H1 (cell line): ENCODE measurements at regions of chr1 and their contacts with region 1.

Region 1: GRCh38 chr1:117284399-117285215 is 73.9 kb upstream of the VTCN1 start:
- DNase-seq: no peak
- H3K4me3 ChIP-seq: no peak overlapping the region
- H3K27ac ChIP-seq: no peak overlapping the region
- H3K4me1 ChIP-seq: no peaks in the 10 kb centered on the region
- H3K27me3 ChIP-seq: no peaks in the 10 kb centered on the region
- CTCF ChIP-seq: peak in 2 of 3 experiments; percentile 67 to 76; a peak in 3 of 4 replicates
- EP300 ChIP-seq: no peak
- POLR2A ChIP-seq: no peak
- RAD21 ChIP-seq: peak; percentile 98 to 99

Region 2: GRCh38 chr1:117067533-117068370 is 216.9 kb before region 1 on chr1:
- CTCF ChIA-PET with region 1: interaction called, 30 read pairs
- POLR2A ChIA-PET with region 1: no interaction called
- DNase-seq: no peak
- H3K4me3 ChIP-seq: no peak overlapping the region
- H3K27ac ChIP-seq: no peak overlapping the region
- H3K4me1 ChIP-seq: no peaks in the 10 kb centered on the region; a peak in 1 of 7 replicates
- H3K27me3 ChIP-seq: peaks cover 0 to 1% (median 0%) of the 10 kb centered on the region in 4 experiments; a peak in 1 of 7 replicates
- CTCF ChIP-seq: peak; percentile 57 to 80 (median 67)
- EP300 ChIP-seq: no peak
- POLR2A ChIP-seq: no peak
- RAD21 ChIP-seq: peak; percentile 86 to 88

Region 3: GRCh38 chr1:117110774-117111173 is 173.8 kb before region 1 on chr1:
- CTCF ChIA-PET with region 1: interaction called, 31 read pairs
- POLR2A ChIA-PET with region 1: interaction called, 4 read pairs
- DNase-seq: no peak
- H3K4me3 ChIP-seq: no peak overlapping the region
- H3K27ac ChIP-seq: no peak overlapping the region
- H3K4me1 ChIP-seq: peaks cover 2 to 5% (median 3%) of the 10 kb centered on the region in 4 experiments; a peak in 4 of 7 replicates
- H3K27me3 ChIP-seq: no peaks in the 10 kb centered on the region
- CTCF ChIP-seq: no peak
- EP300 ChIP-seq: no peak
- POLR2A ChIP-seq: no peak
- RAD21 ChIP-seq: no peak

Region 4: GRCh38 chr1:117128323-117129079 is 156.1 kb before region 1 on chr1:
- CTCF ChIA-PET with region 1: interaction called, 114 read pairs
- POLR2A ChIA-PET with region 1: interaction called, 8 read pairs
- DNase-seq: no peak
- H3K4me3 ChIP-seq: no peak overlapping the region
- H3K27ac ChIP-seq: no peak overlapping the region
- H3K4me1 ChIP-seq: peaks cover 0 to 4% (median 1%) of the 10 kb centered on the region in 4 experiments; a peak in 2 of 7 replicates
- H3K27me3 ChIP-seq: no peaks in the 10 kb centered on the region; a peak in 1 of 7 replicates
- CTCF ChIP-seq: peak in 1 of 3 experiments; percentile 31; a peak in 2 of 4 replicates
- EP300 ChIP-seq: no peak
- POLR2A ChIP-seq: no peak
- RAD21 ChIP-seq: peak; percentile 28 to 30

Region 5: DNA sequence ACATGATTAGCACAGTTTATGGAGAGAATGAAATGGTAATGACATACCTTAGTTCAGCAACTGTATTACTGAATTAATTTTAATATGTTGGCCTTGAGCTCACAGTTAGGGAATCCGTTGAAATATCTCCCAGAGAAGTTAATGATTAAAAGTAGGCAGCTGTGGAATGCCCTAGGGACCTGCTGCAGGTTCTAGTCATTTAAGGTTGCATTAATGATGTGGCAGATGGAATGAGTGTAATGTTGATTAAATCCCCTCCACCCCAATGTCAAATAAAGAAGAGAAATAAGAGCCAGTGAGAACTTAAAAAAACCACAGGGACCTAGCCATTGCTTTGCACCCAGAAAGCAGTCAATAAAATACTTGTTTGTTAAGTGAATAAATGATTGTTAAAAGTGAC is 122.7 kb before region 1 on chr1:
- CTCF ChIA-PET with region 1: interaction called, 14 read pairs
- POLR2A ChIA-PET with region 1: no interaction called
- DNase-seq: no peak
- H3K4me3 ChIP-seq: no peak overlapping the region
- H3K27ac ChIP-seq: no peak overlapping the region
- H3K4me1 ChIP-seq: peaks cover 0 to 4% (median 2%) of the 10 kb centered on the region in 4 experiments; a peak in 2 of 7 replicates
- H3K27me3 ChIP-seq: no peaks in the 10 kb centered on the region
- CTCF ChIP-seq: no peak
- EP300 ChIP-seq: no peak
- POLR2A ChIP-seq: no peak
- RAD21 ChIP-seq: no peak

Region 6: DNA sequence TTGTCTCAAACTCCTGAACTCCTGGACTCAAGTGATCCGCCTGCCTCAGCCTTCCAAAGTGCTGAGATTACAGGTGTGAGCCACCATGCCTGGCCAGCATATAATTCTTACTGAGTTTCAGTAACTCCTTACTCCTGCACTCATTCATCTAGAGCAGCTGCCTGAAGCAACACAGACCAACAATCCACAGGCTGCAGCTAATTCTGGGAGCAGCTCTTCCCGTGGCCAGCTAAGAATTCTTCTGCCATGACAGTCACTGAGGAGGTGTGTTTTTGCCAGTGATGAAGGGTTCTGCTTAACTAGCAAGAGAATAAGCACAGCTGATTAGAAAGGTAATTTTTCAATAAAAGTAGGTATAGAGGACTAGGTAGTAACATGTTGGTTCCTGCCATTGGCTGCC is 79.2 kb before region 1 on chr1:
- CTCF ChIA-PET with region 1: interaction called, 12 read pairs
- POLR2A ChIA-PET with region 1: no interaction called
- DNase-seq: no peak
- H3K4me3 ChIP-seq: no peak overlapping the region
- H3K27ac ChIP-seq: no peak overlapping the region
- H3K4me1 ChIP-seq: peaks cover 0 to 3% (median 1%) of the 10 kb centered on the region in 4 experiments; a peak in 3 of 7 replicates
- H3K27me3 ChIP-seq: no peaks in the 10 kb centered on the region
- CTCF ChIP-seq: no peak
- EP300 ChIP-seq: no peak
- POLR2A ChIP-seq: no peak
- RAD21 ChIP-seq: no peak

Region 7: DNA sequence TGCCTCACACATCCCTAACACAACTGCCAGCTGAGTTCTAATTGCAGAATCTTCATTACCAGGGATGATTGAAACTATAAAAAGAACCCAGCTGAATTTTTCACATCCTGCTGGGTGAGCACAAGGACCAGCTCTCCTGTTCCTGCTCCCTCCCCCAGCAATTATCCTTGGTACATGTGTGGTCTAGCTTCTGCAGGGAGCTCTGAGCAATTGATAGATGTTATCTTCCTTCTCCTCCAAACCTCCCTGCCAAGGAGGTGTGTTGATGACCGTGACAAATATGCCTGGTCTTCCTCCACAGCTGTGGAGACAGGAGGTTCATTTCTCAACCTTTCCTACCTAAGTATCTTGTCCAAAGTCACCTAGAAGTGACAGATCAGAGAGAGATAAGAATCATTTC is 17.3 kb after region 1 on chr1:
- CTCF ChIA-PET with region 1: interaction called, 13 read pairs
- POLR2A ChIA-PET with region 1: no interaction called
- DNase-seq: no peak
- H3K4me3 ChIP-seq: no peak overlapping the region
- H3K27ac ChIP-seq: no peak overlapping the region
- H3K4me1 ChIP-seq: peaks cover 0 to 2% (median 0%) of the 10 kb centered on the region in 4 experiments; a peak in 1 of 7 replicates
- H3K27me3 ChIP-seq: no peaks in the 10 kb centered on the region
- CTCF ChIP-seq: no peak
- EP300 ChIP-seq: no peak
- POLR2A ChIP-seq: no peak
- RAD21 ChIP-seq: no peak